ENCODE measurements at regions of chr12 and their contacts with region 1.

Region 1: DNA sequence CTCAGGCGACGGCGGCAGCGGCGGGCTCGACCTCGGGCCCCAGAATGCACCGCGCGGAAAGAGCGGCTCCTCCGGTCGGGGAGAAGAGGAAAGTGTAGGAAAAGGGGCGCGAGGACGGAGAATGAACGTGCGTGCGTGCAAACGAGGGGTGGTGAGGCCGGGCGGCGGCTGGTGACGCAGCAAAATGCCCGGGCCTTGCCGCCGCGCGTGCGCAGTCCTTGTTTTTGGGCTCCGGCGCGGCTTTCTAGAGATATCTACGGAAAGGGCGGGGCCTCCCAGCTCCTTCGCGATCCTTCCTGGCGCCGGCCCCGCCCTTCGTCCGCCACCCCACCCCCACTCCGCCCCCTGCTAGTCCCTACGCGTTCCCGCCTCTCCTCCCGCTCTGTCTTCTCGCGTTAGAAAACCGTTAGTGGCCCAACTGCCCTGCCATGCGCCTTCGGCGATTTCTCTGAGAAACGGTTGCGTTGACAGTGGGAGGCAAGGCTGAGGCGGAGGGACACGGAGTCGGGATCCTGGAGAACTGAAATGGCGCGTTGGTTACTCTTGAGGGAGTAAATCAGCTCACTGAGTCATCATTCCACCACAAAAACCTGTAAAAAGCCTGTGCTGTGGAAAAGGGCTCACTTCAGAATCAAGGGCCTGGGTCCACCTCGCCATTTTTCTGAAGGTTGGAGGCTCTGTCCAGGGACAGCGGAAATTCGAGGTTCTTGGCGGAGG is at the start of gene PTGES3:
- DNase-seq: peak; percentile 99
- H3K4me3 ChIP-seq: peak within 1 kb of the TSS; percentile 91
- H3K27ac ChIP-seq: peak within 1 kb of the TSS; percentile 100
- H3K4me1 ChIP-seq: peaks cover 9% of the 10 kb centered on the region
- H3K27me3 ChIP-seq: no peaks in the 10 kb centered on the region
- CTCF ChIP-seq: no peak
- total RNA-seq, gene PTGES3: 413 and 450 TPM in 2 replicates

Region 2: DNA sequence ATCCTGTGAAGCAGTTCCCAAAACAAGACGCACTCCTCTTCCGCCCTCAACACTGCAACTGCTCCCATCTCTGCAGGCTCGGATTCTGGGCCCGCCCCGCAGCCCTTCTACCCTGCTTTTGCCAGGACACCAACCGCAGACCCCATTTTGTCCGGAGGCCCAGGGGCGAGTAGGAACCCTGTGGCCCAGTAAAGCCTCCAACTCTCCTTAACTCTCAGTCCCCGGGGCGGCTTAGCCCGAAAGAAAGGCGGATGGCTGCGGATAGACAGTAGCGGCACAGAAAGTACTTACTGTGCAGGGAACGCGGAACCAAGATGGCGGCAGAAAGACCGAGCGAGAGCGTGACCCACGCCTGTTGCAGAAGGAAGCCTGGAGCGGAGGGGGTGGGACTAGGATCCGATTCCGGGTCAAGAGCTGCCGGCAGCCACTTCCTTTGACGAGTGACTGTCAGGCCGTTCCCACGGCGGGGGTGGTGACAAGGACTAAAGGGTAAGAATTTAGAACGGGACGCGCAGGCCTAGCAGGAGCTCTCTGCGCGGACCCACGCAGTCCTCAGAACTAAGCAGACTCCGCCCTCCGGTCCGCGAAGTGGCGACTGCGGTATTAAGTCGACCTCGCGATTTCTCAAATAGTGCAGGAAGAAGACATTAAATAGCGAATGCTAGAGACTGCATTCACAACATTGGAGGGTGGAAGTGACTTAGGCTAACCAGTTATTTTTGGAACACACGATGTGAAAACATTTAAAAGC is 36.9 kb after region 1 on chr12 and contains the start of gene NACA:
- CTCF ChIA-PET with region 1: no interaction called
- POLR2A ChIA-PET with region 1: interaction called, 8 read pairs
- intact Hi-C with region 1: loop called (anchors 2 kb)
- DNase-seq: peak; percentile 99
- H3K4me3 ChIP-seq: peak within 1 kb of the TSS; percentile 89
- H3K27ac ChIP-seq: peak within 1 kb of the TSS; percentile 96
- H3K4me1 ChIP-seq: peaks cover 34% of the 10 kb centered on the region
- H3K27me3 ChIP-seq: no peaks in the 10 kb centered on the region
- CTCF ChIP-seq: no peak
- total RNA-seq, gene NACA: 906 and 908 TPM in 2 replicates

Region 3: GRCh38 chr12:57096099-57096572 is 407.8 kb after region 1 on chr12:
- CTCF ChIA-PET with region 1: no interaction called
- POLR2A ChIA-PET with region 1: interaction called, 13 read pairs
- intact Hi-C with region 1: no loop called
- DNase-seq: no peak
- H3K4me3 ChIP-seq: no peak overlapping the region
- H3K27ac ChIP-seq: peak overlapping the region; percentile 53
- H3K4me1 ChIP-seq: peaks cover 39% of the 10 kb centered on the region
- H3K27me3 ChIP-seq: no peaks in the 10 kb centered on the region
- CTCF ChIP-seq: no peak

Region 4: GRCh38 chr12:57543581-57543980 is 855.3 kb after region 1 on chr12:
- CTCF ChIA-PET with region 1: interaction called, 11 read pairs
- POLR2A ChIA-PET with region 1: no interaction called
- intact Hi-C with region 1: no loop called
- DNase-seq: peak; percentile 48
- H3K4me3 ChIP-seq: no peak overlapping the region
- H3K27ac ChIP-seq: no peak overlapping the region
- H3K4me1 ChIP-seq: peaks cover 13% of the 10 kb centered on the region
- H3K27me3 ChIP-seq: no peaks in the 10 kb centered on the region
- CTCF ChIP-seq: no peak